ENCODE measurements at regions of chr14 and their contacts with region 1.

Region 1: GRCh38 chr14:91996948-91997371 is 42.9 kb downstream of the TRIP11 start:
- DNase-seq: no peak
- H3K4me3 ChIP-seq: no peak overlapping the region
- H3K27ac ChIP-seq: no peak overlapping the region
- H3K4me1 ChIP-seq: no peaks in the 10 kb centered on the region
- H3K27me3 ChIP-seq: no peaks in the 10 kb centered on the region
- CTCF ChIP-seq: peak in 3 of 4 experiments; percentile 23 to 56 (median 48)
- POLR2A ChIP-seq: no peak

Region 2: DNA sequence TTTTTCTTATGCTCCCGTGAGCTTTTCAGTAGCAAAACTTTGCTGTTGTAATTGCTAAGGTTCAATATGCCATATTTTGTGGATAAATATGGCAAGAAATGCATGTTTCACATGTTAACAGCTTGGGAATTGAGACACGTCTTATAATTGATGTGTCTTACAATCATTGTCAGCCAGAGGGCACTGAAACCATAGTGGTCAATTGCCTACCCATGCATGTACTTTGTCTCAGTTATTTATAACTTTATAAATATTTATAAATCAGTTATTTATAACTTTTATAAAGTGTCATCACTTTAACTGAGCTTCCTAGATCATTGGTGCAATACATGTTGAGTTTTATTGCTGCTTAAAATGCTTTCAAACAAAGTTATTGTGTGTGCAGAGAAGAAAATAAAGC is 347.0 kb before region 1 on chr14:
- intact Hi-C with region 1: loop called (anchors 10 kb)
- DNase-seq: peak; percentile 32
- H3K4me3 ChIP-seq: no peak overlapping the region
- H3K27ac ChIP-seq: no peak overlapping the region
- H3K4me1 ChIP-seq: no peaks in the 10 kb centered on the region
- H3K27me3 ChIP-seq: no peaks in the 10 kb centered on the region
- CTCF ChIP-seq: peak; percentile 44 to 84 (median 58)
- POLR2A ChIP-seq: no peak

Region 3: DNA sequence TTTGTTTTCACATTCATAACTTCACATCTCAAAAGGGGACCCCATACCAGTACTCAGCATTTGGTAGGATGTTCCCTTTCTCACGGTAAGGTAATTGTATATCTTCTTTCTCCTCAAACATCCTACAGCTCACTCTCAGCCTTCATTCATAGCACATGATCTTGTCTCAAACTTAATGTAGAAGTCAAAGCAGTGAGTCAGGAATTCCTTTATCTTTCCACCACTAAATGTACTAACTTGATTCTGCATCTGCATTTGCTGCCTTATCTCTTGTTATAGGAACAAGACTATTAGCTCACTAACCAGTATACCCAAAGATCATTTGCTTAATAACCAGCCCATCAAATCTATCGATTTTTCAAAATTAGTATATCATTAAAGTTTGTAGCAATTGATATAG is 147.7 kb after region 1 on chr14:
- intact Hi-C with region 1: no loop called
- DNase-seq: no peak
- H3K4me3 ChIP-seq: no peak overlapping the region
- H3K27ac ChIP-seq: no peak overlapping the region
- H3K4me1 ChIP-seq: no peaks in the 10 kb centered on the region
- H3K27me3 ChIP-seq: no peaks in the 10 kb centered on the region
- CTCF ChIP-seq: no peak
- POLR2A ChIP-seq: no peak